PC-9 (cell line): ENCODE measurements at regions of chr7 and their contacts with region 1.

Region 1: DNA sequence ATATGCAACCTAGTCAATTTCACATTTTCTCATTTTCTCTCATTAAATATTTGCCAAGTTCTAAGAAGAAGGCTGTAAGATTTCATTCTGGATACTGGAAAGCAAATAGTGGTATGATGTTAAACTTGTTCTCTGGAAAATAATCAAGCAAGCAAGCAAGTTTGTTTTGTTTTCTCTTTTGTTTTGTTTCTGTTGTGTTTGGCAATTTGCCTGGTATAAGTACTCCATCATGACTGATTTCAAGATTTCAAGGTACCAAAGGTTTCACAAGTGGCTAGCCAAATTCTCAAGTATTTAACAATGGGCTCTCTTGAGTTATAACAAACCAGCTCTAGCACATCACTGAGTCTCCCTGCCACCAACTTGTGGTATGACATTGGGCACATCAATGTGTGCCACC is 151.6 kb upstream of the IGFBP3 start:
- DNase-seq: peak; percentile 14 to 84
- H3K4me3 ChIP-seq: no peak overlapping the region
- H3K27ac ChIP-seq: peak overlapping the region; percentile 28
- H3K4me1 ChIP-seq: peaks cover 28% of the 10 kb centered on the region
- H3K27me3 ChIP-seq: no peaks in the 10 kb centered on the region
- CTCF ChIP-seq: no peak

Region 2: GRCh38 chr7:46032984-46033383 is 39.7 kb before region 1 on chr7:
- CTCF ChIA-PET with region 1: no interaction called
- POLR2A ChIA-PET with region 1: no interaction called
- intact Hi-C with region 1: loop called (anchors 5 kb)
- DNase-seq: peak; percentile 54 to 99
- H3K4me3 ChIP-seq: no peak overlapping the region; the same call in 1 of the 2 replicates
- H3K27ac ChIP-seq: peak overlapping the region; percentile 92
- H3K4me1 ChIP-seq: peaks cover 58% of the 10 kb centered on the region
- H3K27me3 ChIP-seq: no peaks in the 10 kb centered on the region
- CTCF ChIP-seq: no peak

Region 3: GRCh38 chr7:46054272-46054671 is 18.4 kb before region 1 on chr7:
- CTCF ChIA-PET with region 1: no interaction called
- POLR2A ChIA-PET with region 1: no interaction called
- intact Hi-C with region 1: loop called (anchors 2 kb)
- DNase-seq: no peak
- H3K4me3 ChIP-seq: no peak overlapping the region
- H3K27ac ChIP-seq: no peak overlapping the region
- H3K4me1 ChIP-seq: no peaks in the 10 kb centered on the region
- H3K27me3 ChIP-seq: no peaks in the 10 kb centered on the region
- CTCF ChIP-seq: no peak

Region 4: GRCh38 chr7:46139079-46139478 is 66.4 kb after region 1 on chr7:
- CTCF ChIA-PET with region 1: no interaction called
- POLR2A ChIA-PET with region 1: interaction called, 4 read pairs
- intact Hi-C with region 1: loop called (anchors 1 kb)
- DNase-seq: peak; percentile 40 to 100
- H3K4me3 ChIP-seq: no peak overlapping the region
- H3K27ac ChIP-seq: peak overlapping the region; percentile 83
- H3K4me1 ChIP-seq: peaks cover 29% of the 10 kb centered on the region
- H3K27me3 ChIP-seq: no peaks in the 10 kb centered on the region
- CTCF ChIP-seq: no peak

Region 5: DNA sequence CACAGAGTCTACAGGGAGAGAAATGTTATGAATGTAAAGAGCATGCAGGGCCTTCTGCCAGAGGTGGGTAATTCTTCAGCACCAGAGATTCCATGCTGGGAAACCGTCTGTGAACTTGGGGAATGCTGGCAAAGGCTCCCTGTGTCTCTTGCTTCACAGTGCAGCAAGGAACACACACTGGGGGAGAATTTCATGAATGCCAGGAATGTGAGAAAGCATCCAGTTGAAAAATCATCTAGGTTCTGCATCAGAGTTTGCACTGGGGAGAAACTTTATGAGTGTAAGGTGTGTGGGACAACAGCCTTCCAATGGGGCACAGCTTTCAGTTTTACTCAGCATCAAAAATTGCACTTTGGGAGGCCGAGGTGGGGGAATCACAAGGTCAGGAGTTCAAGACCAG is 72.7 kb after region 1 on chr7:
- CTCF ChIA-PET with region 1: no interaction called
- POLR2A ChIA-PET with region 1: no interaction called
- intact Hi-C with region 1: loop called (anchors 2 kb)
- DNase-seq: peak; percentile 89 to 99
- H3K4me3 ChIP-seq: no peak overlapping the region
- H3K27ac ChIP-seq: peak overlapping the region; percentile 80
- H3K4me1 ChIP-seq: peaks cover 29% of the 10 kb centered on the region
- H3K27me3 ChIP-seq: no peaks in the 10 kb centered on the region
- CTCF ChIP-seq: no peak

Region 6: GRCh38 chr7:46257766-46258448 is 185.2 kb after region 1 on chr7:
- CTCF ChIA-PET with region 1: no interaction called
- POLR2A ChIA-PET with region 1: interaction called, 4 read pairs
- intact Hi-C with region 1: loop called (anchors 2 kb)
- DNase-seq: peak; percentile 41 to 87
- H3K4me3 ChIP-seq: no peak overlapping the region
- H3K27ac ChIP-seq: peak overlapping the region; percentile 12; the same call in 1 of the 2 replicates
- H3K4me1 ChIP-seq: peaks cover 23% of the 10 kb centered on the region
- H3K27me3 ChIP-seq: no peaks in the 10 kb centered on the region
- CTCF ChIP-seq: no peak

Region 7: DNA sequence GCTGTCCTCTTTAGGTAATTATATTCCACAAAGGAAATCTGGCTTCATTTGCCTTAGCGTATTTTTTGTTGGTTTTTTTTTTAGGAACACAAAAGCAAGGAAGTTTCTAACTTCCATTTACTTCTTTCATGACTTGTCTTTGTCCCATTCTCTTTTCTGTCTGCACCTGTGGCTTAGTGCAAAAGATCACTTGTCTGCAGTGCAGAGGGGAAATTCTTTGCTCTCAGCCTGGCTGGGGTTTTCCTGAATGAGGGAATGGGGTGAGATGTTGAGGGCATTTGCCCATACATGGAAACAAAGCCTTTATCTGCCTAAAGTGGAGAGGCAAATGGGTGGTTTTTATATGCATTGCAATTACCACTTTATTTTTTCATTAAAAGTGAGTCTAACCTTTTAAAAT is 209.5 kb after region 1 on chr7:
- CTCF ChIA-PET with region 1: no interaction called
- POLR2A ChIA-PET with region 1: interaction called, 15 read pairs
- intact Hi-C with region 1: no loop called
- DNase-seq: no peak
- H3K4me3 ChIP-seq: no peak overlapping the region
- H3K27ac ChIP-seq: peak overlapping the region; percentile 83
- H3K4me1 ChIP-seq: peaks cover 31% of the 10 kb centered on the region
- H3K27me3 ChIP-seq: no peaks in the 10 kb centered on the region
- CTCF ChIP-seq: no peak